ENCODE measurements at regions of chr1 and their contacts with region 1.

Region 1: GRCh38 chr1:6889875-6890480 is 104.7 kb downstream of the CAMTA1 start:
- DNase-seq: no peak
- ATAC-seq: peak; percentile 90
- H3K4me3 ChIP-seq: no peak overlapping the region
- H3K27ac ChIP-seq: no peak overlapping the region
- H3K4me1 ChIP-seq: peaks cover 11% of the 10 kb centered on the region
- H3K27me3 ChIP-seq: no peaks in the 10 kb centered on the region
- CTCF ChIP-seq: peak; percentile 74 to 84 (median 82)
- EP300 ChIP-seq: no peak
- POLR2A ChIP-seq: no peak
- RAD21 ChIP-seq: peak; percentile 75

Region 2: DNA sequence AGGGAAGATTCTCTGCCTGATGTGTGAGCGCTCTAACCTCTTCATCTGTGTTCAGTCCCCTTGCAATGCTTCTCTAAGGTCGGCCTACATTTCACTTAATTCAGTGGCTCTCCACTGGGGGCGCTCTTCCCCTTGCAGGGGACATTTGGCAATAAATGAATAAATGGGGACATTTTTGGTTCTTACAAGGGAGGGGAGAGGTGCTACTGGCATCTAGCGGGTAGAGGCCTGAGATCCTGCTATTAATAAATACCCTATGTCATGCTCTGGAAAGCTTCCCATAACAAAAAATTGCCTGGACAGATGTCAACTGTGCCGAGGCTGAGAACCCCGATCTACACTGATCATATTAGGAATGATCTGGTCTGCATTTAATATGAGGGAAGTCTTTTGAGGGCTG is 162.4 kb before region 1 on chr1:
- CTCF ChIA-PET with region 1: interaction called, 21 read pairs
- POLR2A ChIA-PET with region 1: no interaction called
- RAD21 ChIA-PET with region 1: interaction called, 5 read pairs
- SMC1A ChIA-PET with region 1: interaction called, 6 read pairs
- in situ Hi-C with region 1: loop called (anchors 5 kb)
- intact Hi-C with region 1: loop called (anchors 2 kb)
- DNase-seq: peak; percentile 16
- ATAC-seq: peak; percentile 87
- H3K4me3 ChIP-seq: no peak overlapping the region
- H3K27ac ChIP-seq: no peak overlapping the region
- H3K4me1 ChIP-seq: no peaks in the 10 kb centered on the region
- H3K27me3 ChIP-seq: no peaks in the 10 kb centered on the region
- CTCF ChIP-seq: peak; percentile 82 to 95 (median 86)
- EP300 ChIP-seq: no peak
- POLR2A ChIP-seq: no peak
- RAD21 ChIP-seq: peak; percentile 83

Region 3: GRCh38 chr1:6794164-6794563 is 95.8 kb before region 1 on chr1:
- CTCF ChIA-PET with region 1: interaction called, 63 read pairs
- POLR2A ChIA-PET with region 1: no interaction called
- RAD21 ChIA-PET with region 1: interaction called, 21 read pairs
- SMC1A ChIA-PET with region 1: interaction called, 12 read pairs
- in situ Hi-C with region 1: no loop called
- intact Hi-C with region 1: loop called (anchors 1 kb)
- DNase-seq: no peak
- ATAC-seq: no peak
- H3K4me3 ChIP-seq: no peak overlapping the region
- H3K27ac ChIP-seq: no peak overlapping the region
- H3K4me1 ChIP-seq: no peaks in the 10 kb centered on the region
- H3K27me3 ChIP-seq: no peaks in the 10 kb centered on the region
- CTCF ChIP-seq: peak; percentile 13 to 62 (median 36); a peak in 3 of 6 replicates
- EP300 ChIP-seq: no peak
- POLR2A ChIP-seq: no peak
- RAD21 ChIP-seq: peak; percentile 65

Region 4: GRCh38 chr1:6822530-6823359 is 67.2 kb before region 1 on chr1:
- CTCF ChIA-PET with region 1: interaction called, 14 read pairs
- POLR2A ChIA-PET with region 1: interaction called, 3 read pairs
- RAD21 ChIA-PET with region 1: interaction called, 4 read pairs
- SMC1A ChIA-PET with region 1: interaction called, 7 read pairs
- in situ Hi-C with region 1: no loop called
- intact Hi-C with region 1: no loop called
- DNase-seq: peak; percentile 53
- ATAC-seq: peak; percentile 95
- H3K4me3 ChIP-seq: no peak overlapping the region
- H3K27ac ChIP-seq: peak overlapping the region; percentile 30
- H3K4me1 ChIP-seq: peaks cover 21% of the 10 kb centered on the region
- H3K27me3 ChIP-seq: no peaks in the 10 kb centered on the region
- CTCF ChIP-seq: no peak
- EP300 ChIP-seq: peak in 1 of 2 experiments; percentile 40; a peak in 2 of 4 replicates
- POLR2A ChIP-seq: no peak
- RAD21 ChIP-seq: no peak

Region 5: DNA sequence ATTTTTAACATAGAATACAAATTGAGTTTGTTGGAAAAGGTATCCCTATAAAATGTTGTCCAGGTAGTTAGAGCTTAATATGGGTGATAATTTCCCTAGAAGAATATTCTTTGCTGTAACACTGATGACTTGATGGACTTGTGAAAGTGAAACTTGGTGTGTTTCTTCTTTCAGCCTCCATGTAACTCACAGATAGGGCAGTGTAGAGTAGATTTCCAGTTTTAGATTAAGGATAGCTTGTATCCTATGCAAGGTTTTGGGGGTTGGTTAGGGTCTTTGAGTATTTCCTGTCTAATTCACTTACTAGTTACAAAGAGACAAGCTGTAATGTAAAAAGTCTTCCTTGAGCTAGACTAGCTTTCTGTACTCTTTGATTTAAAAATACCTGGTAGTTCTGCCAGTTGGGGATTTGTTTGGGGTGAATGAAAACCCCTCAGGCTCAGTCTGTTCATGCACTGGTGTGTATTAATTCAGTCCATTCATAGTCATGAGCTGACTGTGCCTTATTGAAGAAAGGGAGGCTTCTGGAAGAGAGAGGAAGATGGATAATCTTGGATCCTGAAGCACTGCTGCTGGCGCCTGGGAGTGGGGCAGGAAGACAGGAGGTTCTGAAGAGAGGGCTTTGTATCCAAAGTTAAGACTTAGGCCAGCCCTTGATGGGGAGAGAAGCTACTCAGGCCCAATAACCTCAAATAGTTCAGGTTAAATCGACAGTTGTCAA is 21.2 kb before region 1 on chr1:
- CTCF ChIA-PET with region 1: interaction called, 52 read pairs
- POLR2A ChIA-PET with region 1: no interaction called
- RAD21 ChIA-PET with region 1: interaction called, 8 read pairs
- SMC1A ChIA-PET with region 1: interaction called, 68 read pairs
- in situ Hi-C with region 1: no loop called
- intact Hi-C with region 1: no loop called
- DNase-seq: no peak
- ATAC-seq: peak; percentile 93
- H3K4me3 ChIP-seq: no peak overlapping the region; the same call in 1 of the 2 replicates
- H3K27ac ChIP-seq: peak overlapping the region; percentile 9; the same call in 1 of the 2 replicates
- H3K4me1 ChIP-seq: peaks cover 16% of the 10 kb centered on the region
- H3K27me3 ChIP-seq: no peaks in the 10 kb centered on the region
- CTCF ChIP-seq: no peak
- EP300 ChIP-seq: no peak
- POLR2A ChIP-seq: no peak
- RAD21 ChIP-seq: no peak

Region 6: GRCh38 chr1:6962996-6963911 is 73.3 kb after region 1 on chr1:
- CTCF ChIA-PET with region 1: no interaction called
- POLR2A ChIA-PET with region 1: no interaction called
- RAD21 ChIA-PET with region 1: no interaction called
- SMC1A ChIA-PET with region 1: no interaction called
- in situ Hi-C with region 1: no loop called
- intact Hi-C with region 1: no loop called
- DNase-seq: peak; percentile 24
- ATAC-seq: peak; percentile 67
- H3K4me3 ChIP-seq: no peak overlapping the region
- H3K27ac ChIP-seq: no peak overlapping the region
- H3K4me1 ChIP-seq: no peaks in the 10 kb centered on the region
- H3K27me3 ChIP-seq: peaks cover 0 to 3% of the 10 kb centered on the region in 2 experiments; a peak in 2 of 4 replicates
- CTCF ChIP-seq: no peak
- EP300 ChIP-seq: no peak
- POLR2A ChIP-seq: no peak
- RAD21 ChIP-seq: no peak

Measured in GM12878 (cell line).